GM10248 (cell line): ENCODE measurements at regions of chr6 and their contacts with region 1.

Region 1: GRCh38 chr6:143940011-143940597 is 68.0 kb downstream of the PLAGL1 start:
- DNase-seq: peak; percentile 81
- CTCF ChIP-seq: peak; percentile 62

Region 2: DNA sequence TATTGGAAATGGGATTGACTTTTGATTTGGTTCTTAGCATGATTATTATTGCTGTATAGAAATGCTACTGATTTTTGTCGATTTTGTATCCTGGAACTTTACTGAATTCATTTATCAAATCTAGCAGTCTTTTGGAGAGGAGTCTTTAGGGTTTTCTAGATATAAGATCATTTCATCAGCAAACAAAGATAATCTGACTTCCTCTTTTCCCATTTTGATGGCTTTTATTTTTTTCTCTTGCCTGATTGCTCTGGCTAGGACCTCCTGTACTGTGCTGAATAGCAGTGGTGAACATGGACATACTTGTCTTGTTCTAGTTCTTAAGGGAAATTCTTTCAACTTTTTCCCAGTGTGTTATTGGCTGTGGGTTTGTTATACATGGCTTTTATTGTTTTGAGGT is 11.3 kb before region 1 on chr6:
- CTCF ChIA-PET with region 1: interaction called, 13 read pairs
- POLR2A ChIA-PET with region 1: no interaction called
- DNase-seq: no peak
- CTCF ChIP-seq: no peak

Region 3: GRCh38 chr6:143958839-143959399 is 18.8 kb after region 1 on chr6:
- CTCF ChIA-PET with region 1: interaction called, 12 read pairs
- POLR2A ChIA-PET with region 1: no interaction called
- DNase-seq: no peak
- CTCF ChIP-seq: no peak

Region 4: GRCh38 chr6:144013486-144013909 is 73.4 kb after region 1 on chr6:
- CTCF ChIA-PET with region 1: interaction called, 27 read pairs
- POLR2A ChIA-PET with region 1: no interaction called
- DNase-seq: peak; percentile 50
- CTCF ChIP-seq: peak; percentile 85

Region 5: GRCh38 chr6:144087789-144088426 is 147.8 kb after region 1 on chr6:
- CTCF ChIA-PET with region 1: interaction called, 16 read pairs
- POLR2A ChIA-PET with region 1: no interaction called
- DNase-seq: no peak
- CTCF ChIP-seq: peak; percentile 50